ENCODE measurements at regions of chr12 and their contacts with region 1.

Region 1: DNA sequence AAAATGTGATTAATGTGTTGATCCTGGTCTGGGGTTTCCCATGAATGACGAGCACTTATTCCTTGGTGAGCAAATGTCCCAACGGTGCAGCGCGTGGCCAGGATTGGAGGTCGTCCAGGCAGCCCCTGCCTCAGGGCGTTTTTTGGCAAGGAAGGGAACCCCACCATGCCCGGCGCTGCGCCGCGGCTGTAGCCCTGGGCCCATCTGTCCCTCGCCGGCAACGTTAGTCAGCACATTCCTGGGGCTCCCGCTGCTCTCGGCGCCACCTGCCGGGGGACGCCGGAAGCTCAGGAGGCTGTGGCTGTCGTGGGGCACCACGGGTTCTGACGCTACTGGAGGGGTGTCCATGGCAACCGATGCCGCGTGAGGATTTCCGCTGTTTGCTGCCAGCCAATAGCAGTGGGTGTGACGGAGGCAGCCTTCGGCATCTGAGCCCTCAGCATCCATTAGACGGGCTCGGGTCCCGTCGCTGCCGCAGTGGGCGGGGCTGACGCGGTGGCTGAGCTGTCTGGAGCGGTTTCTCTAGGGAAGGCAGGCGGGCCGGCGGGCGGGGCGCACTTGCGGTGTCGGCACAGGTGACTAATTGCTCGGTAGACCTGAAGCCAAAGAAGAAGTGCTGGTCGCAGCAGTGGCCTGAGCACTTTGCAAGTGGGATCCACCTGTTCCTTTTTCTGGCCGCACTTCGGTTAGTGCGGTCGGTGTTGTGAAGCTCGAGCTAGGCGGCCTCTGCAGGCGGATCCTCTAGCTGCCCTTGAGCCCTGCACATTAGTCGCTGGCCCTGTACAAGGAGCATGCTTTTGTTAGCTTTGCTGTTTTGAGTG is 29.5 kb downstream of the RAB35 start:
- DNase-seq: peak; percentile 100
- H3K4me3 Mint-ChIP-seq: peak overlapping the region; percentile 74
- H3K27ac Mint-ChIP-seq: peak overlapping the region; percentile 88
- H3K4me1 Mint-ChIP-seq: peaks cover 28% of the 10 kb centered on the region
- H3K27me3 Mint-ChIP-seq: no peaks in the 10 kb centered on the region

Region 2: DNA sequence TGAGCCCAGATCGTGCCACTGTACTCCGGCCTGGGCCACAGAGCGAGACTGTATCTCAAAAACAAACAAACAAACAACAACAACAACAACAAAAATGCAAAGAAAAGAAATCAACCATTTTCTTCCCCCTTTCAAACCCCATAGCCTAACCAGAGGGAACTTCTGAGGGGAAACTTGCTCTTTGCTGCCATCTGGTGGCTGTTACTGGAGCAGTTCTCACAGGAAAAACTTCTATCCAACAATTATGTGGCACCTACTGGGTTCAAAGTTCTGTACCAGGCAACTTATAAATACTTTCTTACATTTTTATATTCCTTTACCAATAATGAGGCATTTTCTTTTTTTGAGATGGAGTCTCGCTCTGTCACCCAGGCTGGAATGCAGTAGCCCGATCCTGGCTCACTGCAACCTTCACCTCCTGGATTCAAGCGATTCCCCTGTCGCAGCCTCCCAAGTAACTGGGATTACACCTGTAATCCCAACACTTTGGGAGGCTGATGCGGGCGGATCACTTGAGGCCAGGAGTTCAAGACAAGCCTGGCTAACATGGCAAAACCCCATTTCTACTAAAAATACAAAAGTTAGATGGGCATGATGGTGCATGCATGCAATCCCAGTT is 148.9 kb before region 1 on chr12:
- intact Hi-C with region 1: loop called (anchors 2 kb)
- DNase-seq: peak; percentile 45
- H3K4me3 Mint-ChIP-seq: no peak overlapping the region
- H3K27ac Mint-ChIP-seq: no peak overlapping the region
- H3K4me1 Mint-ChIP-seq: peaks cover 2% of the 10 kb centered on the region
- H3K27me3 Mint-ChIP-seq: peaks cover 5% of the 10 kb centered on the region

Region 3: DNA sequence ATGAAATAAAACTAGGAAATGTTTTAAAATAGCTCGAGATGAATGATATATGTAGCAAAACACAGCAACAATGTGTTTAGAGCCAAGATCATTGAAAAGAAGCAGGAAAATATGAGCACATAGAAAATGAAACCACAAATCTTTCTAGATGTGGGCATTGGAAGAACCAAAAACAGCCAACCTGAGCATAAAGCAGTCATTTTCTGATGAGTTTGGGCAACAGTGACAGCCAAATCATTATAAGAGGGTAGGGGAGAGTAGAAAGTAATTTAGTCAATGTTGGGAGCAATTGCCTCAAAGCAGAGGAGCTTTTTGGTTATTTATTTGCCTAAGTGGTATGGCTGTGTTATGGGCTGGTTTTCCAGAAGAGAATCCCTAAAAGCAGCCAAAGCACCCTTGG is 106.8 kb before region 1 on chr12:
- intact Hi-C with region 1: loop called (anchors 2 kb)
- DNase-seq: no peak
- H3K4me3 Mint-ChIP-seq: peak overlapping the region; percentile 2
- H3K27ac Mint-ChIP-seq: peak overlapping the region; percentile 80
- H3K4me1 Mint-ChIP-seq: peaks cover 8% of the 10 kb centered on the region
- H3K27me3 Mint-ChIP-seq: peaks cover 16% of the 10 kb centered on the region

Region 4: GRCh38 chr12:119988782-119989668 is 98.0 kb before region 1 on chr12 and contains the start of gene BICDL1:
- intact Hi-C with region 1: loop called (anchors 1 kb)
- DNase-seq: peak; percentile 97
- H3K4me3 Mint-ChIP-seq: peak within 1 kb of the TSS; percentile 94
- H3K27ac Mint-ChIP-seq: peak within 1 kb of the TSS; percentile 91
- H3K4me1 Mint-ChIP-seq: peaks cover 44% of the 10 kb centered on the region
- H3K27me3 Mint-ChIP-seq: peaks cover 1% of the 10 kb centered on the region
- total RNA-seq, gene BICDL1: 127 and 130 TPM in 2 replicates

Region 5: DNA sequence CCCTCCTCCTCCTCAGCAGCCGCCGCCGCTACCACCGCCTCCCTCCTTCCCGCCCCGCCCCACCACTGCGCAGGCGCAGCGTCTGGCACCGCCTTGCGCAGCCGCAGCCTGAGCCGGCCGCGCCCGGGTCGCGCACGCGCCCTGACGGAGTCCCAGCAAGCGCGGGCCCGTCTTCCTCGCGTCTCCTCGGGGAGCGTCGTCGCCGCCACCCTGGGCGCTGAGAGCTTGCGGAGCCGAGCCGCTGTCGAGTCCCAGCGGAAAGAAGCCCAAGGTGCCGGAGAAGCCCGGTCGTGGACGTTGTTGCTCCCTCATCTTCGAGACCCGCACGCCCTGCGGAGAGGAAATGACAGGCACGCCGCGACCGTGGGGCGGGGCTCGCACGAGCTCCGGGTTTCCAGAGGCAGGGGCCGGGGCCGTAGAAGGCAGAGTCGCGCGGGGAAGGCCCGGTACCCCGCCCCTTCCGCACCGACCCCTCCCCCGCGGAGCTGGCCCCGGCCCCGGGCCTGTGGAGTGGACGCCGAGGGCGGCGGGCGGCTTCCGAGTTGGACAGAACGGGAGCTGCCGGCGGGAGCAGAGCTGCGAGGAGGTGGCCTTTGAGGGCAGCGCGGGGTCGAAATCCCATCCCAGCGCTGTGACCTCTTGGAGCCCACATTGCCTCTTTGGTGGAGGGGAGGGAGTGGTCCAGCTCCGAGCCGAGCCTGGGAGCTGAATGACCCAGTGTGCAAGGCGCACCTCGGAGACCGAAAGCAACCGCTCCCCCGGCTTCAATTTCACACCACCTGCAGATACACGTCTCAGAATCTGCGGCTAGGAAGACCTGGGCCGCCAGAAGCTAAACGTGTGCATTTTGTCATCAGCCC is 30.0 kb after region 1 on chr12:
- intact Hi-C with region 1: loop called (anchors 1 kb)
- DNase-seq: peak; percentile 97
- H3K4me3 Mint-ChIP-seq: peak overlapping the region; percentile 86
- H3K27ac Mint-ChIP-seq: peak overlapping the region; percentile 83
- H3K4me1 Mint-ChIP-seq: peaks cover 67% of the 10 kb centered on the region
- H3K27me3 Mint-ChIP-seq: no peaks in the 10 kb centered on the region

Measured in activated T-helper 2 cell treated with anti-CD3 and anti-CD28 coated beads, Interferon-gamma antibody, Interleukin-2, Interleukin-4, amounts not matched to agents 10 μg/mL and 5 μg/mL and 100 μg/mL, durations not matched to agents 14 hours and 24 hours and 36 hours (primary cell).